Activated CD8-positive, alpha-beta T cell treated with anti-CD3 and anti-CD28 coated beads, Interleukin-2, amount 10 ng/mL, durations not matched to agents 7 days and 5 days (primary cell): ENCODE measurements at regions of chr1 and their contacts with region 1.

Region 1: DNA sequence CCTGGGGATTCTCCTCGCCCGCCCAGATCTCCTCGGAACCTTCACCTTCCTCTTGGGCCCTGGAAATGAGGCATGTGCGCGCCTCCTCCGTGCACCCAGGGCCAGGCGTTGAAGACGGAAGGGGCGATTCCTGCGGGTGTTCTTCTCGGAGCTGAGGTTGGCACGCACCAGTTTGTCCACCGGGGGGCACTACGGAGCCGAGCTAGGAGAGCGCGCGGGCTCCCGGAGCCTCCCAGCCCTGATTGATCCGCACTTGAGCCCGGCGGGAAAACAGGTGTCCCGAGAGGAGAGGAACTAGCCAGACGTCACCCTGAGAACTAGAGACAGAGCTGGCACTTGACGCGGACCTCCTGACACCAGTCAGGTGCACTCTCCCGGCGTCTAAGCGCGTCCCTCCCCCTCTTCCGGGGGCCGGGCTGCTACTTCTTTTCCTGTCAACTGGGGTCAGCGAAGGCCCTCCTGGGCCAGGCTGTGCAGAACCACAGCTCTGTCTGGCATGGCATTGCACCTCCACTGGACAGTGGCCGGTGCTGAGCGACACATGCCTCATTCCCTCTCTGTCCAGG is 18.3 kb upstream of the SERINC2 start:
- DNase-seq: peak; percentile 85
- ATAC-seq: peak; percentile 97
- H3K4me3 Mint-ChIP-seq: peak overlapping the region; percentile 79
- H3K27ac Mint-ChIP-seq: peak overlapping the region; percentile 70
- H3K4me1 Mint-ChIP-seq: peaks cover 16% of the 10 kb centered on the region
- H3K27me3 Mint-ChIP-seq: peaks cover 7% of the 10 kb centered on the region

Region 2: GRCh38 chr1:31189696-31190674 is 204.7 kb before region 1 on chr1:
- CTCF ChIA-PET with region 1: no interaction called
- POLR2A ChIA-PET with region 1: no interaction called
- DNase-seq: no peak
- ATAC-seq: no peak
- H3K4me3 Mint-ChIP-seq: no peak overlapping the region
- H3K27ac Mint-ChIP-seq: no peak overlapping the region
- H3K4me1 Mint-ChIP-seq: no peaks in the 10 kb centered on the region
- H3K27me3 Mint-ChIP-seq: no peaks in the 10 kb centered on the region

Region 3: DNA sequence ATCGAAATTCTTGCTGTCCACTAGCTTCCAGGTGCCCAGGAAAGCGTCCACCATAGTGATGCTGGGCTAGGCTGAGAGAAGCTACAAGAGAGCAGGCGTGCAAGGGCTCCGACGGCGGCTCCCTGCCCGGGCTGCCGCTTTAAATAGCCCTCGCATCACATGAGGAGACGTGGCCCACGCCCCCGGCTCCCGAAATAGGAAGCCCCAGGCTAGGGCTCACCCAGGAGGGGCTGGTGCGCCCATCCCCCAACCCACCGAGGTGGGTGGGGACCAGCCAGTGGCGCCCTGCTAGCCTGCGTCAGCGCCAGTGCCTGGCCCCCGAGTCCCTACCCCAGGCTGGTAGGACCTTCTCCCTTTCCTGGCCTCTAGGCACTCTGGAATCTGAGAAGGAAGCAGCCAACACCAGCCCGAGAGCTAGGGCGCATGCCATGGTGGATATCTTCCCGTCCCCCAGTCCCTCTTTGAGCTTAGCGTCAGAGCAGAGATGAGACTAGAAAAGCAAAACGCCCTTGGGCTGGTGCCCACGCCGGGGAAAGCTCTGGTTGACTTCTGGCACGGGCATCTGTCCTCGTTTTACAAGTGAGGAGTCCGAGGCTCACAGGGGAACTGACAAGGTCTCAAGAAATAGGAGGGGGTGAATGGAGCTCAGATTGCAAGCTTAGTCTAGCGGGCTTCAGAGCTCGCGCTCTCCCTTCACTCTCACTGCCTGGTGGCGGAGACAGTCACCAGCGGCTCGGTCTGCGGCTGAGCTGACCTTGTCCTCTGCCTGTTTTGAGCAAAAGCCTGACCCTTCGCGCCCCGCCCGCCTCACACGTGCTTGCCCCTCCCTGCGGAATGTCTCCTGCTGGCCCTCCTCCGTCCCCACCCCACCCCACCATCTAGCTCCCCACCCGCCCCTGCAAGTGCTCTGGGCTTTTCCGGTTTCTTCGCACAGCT is 21.5 kb before region 1 on chr1 and contains the start of gene FABP3:
- CTCF ChIA-PET with region 1: interaction called, 18 read pairs
- POLR2A ChIA-PET with region 1: interaction called, 3 read pairs
- DNase-seq: peak; percentile 46
- ATAC-seq: peak; percentile 74
- H3K4me3 Mint-ChIP-seq: peak within 1 kb of the TSS; percentile 67
- H3K27ac Mint-ChIP-seq: peak within 1 kb of the TSS; percentile 13
- H3K4me1 Mint-ChIP-seq: peaks cover 20% of the 10 kb centered on the region
- H3K27me3 Mint-ChIP-seq: peaks cover 4% of the 10 kb centered on the region
- total RNA-seq, gene FABP3: not detected

Region 4: DNA sequence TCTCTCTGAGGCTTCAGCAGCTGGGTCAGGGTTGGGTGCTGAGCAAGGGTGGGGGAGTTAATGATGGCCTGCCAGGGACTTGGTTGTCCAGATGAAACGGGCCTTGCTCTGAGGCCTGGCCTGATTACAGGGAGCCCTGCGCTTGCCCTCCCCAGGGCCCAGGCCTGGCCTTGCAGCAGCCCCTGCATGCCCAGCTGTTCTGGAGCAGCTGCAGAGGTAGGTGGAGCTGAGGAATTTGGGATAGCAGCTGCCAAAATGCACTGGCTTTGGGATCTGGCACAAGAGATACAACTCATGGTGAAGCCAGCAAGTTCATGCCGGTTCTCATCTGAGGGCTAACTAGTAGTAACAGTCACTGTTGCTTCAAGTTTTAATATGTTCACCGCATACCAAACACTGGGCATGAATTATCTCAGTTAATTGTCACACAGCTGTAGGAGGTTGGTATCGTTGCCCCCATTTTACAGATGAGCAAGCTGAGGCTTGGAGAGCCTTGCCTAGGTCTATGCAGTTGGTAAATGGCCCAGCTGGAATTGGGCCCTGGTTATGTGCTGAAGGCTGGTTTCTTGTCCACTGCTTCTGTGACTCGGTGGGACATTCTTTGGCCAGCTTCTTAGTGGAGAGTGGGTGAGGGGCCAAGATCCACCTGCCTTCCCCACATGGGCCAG is 11.0 kb after region 1 on chr1:
- CTCF ChIA-PET with region 1: interaction called, 19 read pairs
- POLR2A ChIA-PET with region 1: no interaction called
- DNase-seq: no peak
- ATAC-seq: no peak
- H3K4me3 Mint-ChIP-seq: no peak overlapping the region
- H3K27ac Mint-ChIP-seq: no peak overlapping the region
- H3K4me1 Mint-ChIP-seq: no peaks in the 10 kb centered on the region
- H3K27me3 Mint-ChIP-seq: peaks cover 9% of the 10 kb centered on the region

Region 5: DNA sequence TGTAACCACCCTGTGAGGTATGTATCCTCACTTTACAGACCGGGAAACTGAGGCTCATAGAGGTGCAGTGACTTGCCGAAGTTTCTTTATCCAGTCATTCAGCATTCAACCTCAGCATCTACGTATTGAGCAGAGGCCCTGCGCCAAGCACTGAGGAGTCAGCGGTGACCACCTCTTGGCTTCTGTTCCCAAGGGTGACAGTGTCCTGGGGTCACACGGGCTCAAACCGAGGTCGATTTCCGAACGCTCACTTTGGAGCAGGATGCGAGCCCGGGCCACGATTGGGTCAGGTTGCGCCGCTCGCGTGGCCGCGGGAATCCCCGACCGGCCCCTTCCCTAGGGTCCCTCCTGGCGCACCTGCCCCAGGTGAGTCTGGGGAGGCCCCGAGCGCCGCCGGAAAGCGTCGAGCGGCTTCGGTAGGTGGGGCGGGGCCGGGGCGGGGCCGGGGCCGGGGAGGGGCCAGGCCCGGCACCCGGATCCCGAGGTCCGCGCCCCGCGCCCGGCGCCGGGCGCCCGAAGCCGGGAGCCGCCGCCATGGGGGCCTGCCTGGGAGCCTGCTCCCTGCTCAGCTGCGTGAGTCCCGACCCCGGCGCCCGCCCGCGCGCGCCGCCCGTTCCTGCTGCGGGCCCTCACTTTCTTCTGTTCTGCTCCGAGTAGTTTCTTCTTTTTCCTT is 18.2 kb after region 1 on chr1 and contains the start of gene SERINC2:
- CTCF ChIA-PET with region 1: interaction called, 19 read pairs
- POLR2A ChIA-PET with region 1: no interaction called
- DNase-seq: no peak
- ATAC-seq: peak; percentile 75
- H3K4me3 Mint-ChIP-seq: peak within 1 kb of the TSS; percentile 78
- H3K27ac Mint-ChIP-seq: peak within 1 kb of the TSS; percentile 50
- H3K4me1 Mint-ChIP-seq: peaks cover 4% of the 10 kb centered on the region
- H3K27me3 Mint-ChIP-seq: peaks cover 51% of the 10 kb centered on the region
- total RNA-seq, gene SERINC2: 0.13 TPM in 1 of 2 experiments, not detected in the other

Region 6: GRCh38 chr1:31422505-31423319 is 28.0 kb after region 1 on chr1:
- CTCF ChIA-PET with region 1: interaction called, 45 read pairs
- POLR2A ChIA-PET with region 1: no interaction called
- DNase-seq: peak; percentile 76
- ATAC-seq: peak; percentile 54
- H3K4me3 Mint-ChIP-seq: no peak overlapping the region
- H3K27ac Mint-ChIP-seq: no peak overlapping the region
- H3K4me1 Mint-ChIP-seq: peaks cover 18% of the 10 kb centered on the region
- H3K27me3 Mint-ChIP-seq: peaks cover 17% of the 10 kb centered on the region